ENCODE measurements at regions of chr1 and their contacts with region 1.

Region 1: GRCh38 chr1:235160957-235161684 is at the start of gene RBM34:
- DNase-seq: peak; percentile 92 to 96 (median 93)
- ATAC-seq: peak; percentile 98 to 99 (median 98)
- H3K4me3 ChIP-seq: peak within 1 kb of the TSS; percentile 59 to 90 (median 72)
- H3K27ac ChIP-seq: peak within 1 kb of the TSS; percentile 60 to 92 (median 84)
- H3K4me1 ChIP-seq: peaks cover 0 to 28% (median 16%) of the 10 kb centered on the region in 12 donors
- H3K27me3 ChIP-seq: no peaks in the 10 kb centered on the region
- CTCF ChIP-seq: peak in 8 of 12 donors; percentile 13 to 42 (median 28)
- POLR2A ChIP-seq: peak; percentile 90 to 98
- total RNA-seq, gene RBM34: 34.2 to 75.1 (median 48.6) TPM

Region 2: DNA sequence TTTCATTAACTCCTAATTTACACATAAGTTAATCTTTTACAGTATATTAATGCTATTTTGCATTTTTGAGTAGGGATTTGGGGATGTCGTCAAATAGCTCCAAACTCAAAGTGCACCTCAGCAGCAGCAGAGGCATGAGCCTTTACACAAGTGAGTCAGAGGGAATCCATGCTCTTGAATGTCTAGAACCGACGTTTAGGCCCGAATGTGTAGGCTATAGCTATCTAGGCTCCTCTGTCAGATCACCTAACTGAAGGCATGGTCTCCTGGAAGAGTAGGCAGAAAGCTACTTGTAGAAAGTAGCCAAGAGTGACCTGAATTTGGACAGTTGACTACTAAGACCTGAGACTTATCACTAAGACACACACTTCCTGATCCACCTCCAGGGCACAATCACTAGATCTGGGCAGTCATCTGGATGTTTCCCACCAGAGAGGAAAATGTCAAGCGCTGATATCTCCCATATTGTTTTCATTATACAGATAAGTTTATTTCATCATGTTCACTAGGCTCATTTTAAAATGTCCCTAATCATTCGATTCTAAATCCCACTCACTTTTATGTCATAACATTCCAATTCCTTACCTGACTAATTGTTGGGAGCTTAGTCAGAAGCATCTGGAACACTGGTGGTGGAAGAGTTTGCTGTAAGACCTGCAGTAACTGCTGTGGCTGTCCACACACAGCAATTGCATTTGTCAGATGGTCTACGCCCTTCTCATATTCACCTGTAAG is 47.8 kb before region 1 on chr1:
- intact Hi-C with region 1: no loop called
- DNase-seq: no peak
- ATAC-seq: no peak
- H3K4me3 ChIP-seq: no peak overlapping the region
- H3K27ac ChIP-seq: no peak overlapping the region
- H3K4me1 ChIP-seq: no peaks in the 10 kb centered on the region
- H3K27me3 ChIP-seq: no peaks in the 10 kb centered on the region
- CTCF ChIP-seq: no peak
- POLR2A ChIP-seq: no peak

Region 3: GRCh38 chr1:235128456-235129328 is 32.4 kb before region 1 on chr1 and contains the start of gene TOMM20:
- intact Hi-C with region 1: loop called in 2 of 10 experiments (anchors 2 to 5 kb)
- DNase-seq: peak; percentile 96 to 98 (median 97)
- ATAC-seq: peak; percentile 98 to 99 (median 98)
- H3K4me3 ChIP-seq: peak within 1 kb of the TSS; percentile 76 to 100 (median 89)
- H3K27ac ChIP-seq: peak within 1 kb of the TSS; percentile 74 to 95 (median 91)
- H3K4me1 ChIP-seq: peaks cover 0 to 45% (median 16%) of the 10 kb centered on the region in 12 donors
- H3K27me3 ChIP-seq: no peaks in the 10 kb centered on the region
- CTCF ChIP-seq: no peak
- POLR2A ChIP-seq: peak in 1 of 2 donors; percentile 67
- total RNA-seq, gene TOMM20: 56.7 to 100 (median 83.3) TPM